H1 (cell line): ENCODE measurements at regions of chr12 and their contacts with region 1.

Region 1: GRCh38 chr12:49776413-49776812 is 35.1 kb downstream of the TMBIM6 start:
- DNase-seq: peak; percentile 60 to 76
- H3K4me3 ChIP-seq: no peak overlapping the region
- H3K27ac ChIP-seq: no peak overlapping the region
- H3K4me1 ChIP-seq: peaks cover 0 to 2% (median 0%) of the 10 kb centered on the region in 4 experiments; a peak in 2 of 7 replicates
- H3K27me3 ChIP-seq: no peaks in the 10 kb centered on the region
- CTCF ChIP-seq: peak; percentile 87 to 91 (median 90)
- EP300 ChIP-seq: no peak
- POLR2A ChIP-seq: no peak
- RAD21 ChIP-seq: peak; percentile 90 to 96

Region 2: DNA sequence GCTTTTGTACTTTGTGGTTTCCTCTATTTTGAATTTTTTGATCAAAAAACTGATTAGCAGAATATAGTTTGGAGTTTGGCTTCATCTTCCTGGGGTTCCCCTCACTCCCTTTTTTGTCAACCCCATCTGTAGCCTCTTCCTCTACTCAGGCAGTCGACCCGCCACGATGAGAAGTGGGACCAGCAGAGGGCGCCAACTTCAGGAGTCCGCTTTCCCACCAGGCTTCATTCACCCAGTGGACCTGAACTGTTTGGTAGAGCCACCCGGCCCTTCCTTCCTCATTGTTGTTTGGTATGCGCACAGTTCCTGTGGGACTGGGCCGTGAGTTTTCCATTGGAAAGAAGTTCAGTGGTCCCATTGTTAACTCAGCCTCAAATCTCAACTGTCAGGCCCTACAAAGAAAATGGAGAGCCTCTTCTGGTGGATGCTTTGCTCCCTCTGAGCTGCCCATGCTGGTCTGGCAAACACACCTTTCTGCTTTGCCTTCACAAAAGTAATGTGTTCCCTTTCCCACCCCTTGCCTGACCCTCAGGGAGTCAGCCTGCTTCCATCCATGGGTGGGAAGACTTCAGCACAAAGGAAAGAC is 13.3 kb before region 1 on chr12:
- CTCF ChIA-PET with region 1: interaction called, 29 read pairs
- POLR2A ChIA-PET with region 1: interaction called, 6 read pairs
- DNase-seq: peak; percentile 38 to 92
- H3K4me3 ChIP-seq: no peak overlapping the region
- H3K27ac ChIP-seq: no peak overlapping the region
- H3K4me1 ChIP-seq: peaks cover 0 to 4% (median 0%) of the 10 kb centered on the region in 4 experiments; a peak in 1 of 7 replicates
- H3K27me3 ChIP-seq: no peaks in the 10 kb centered on the region
- CTCF ChIP-seq: peak; percentile 83 to 89 (median 87)
- EP300 ChIP-seq: no peak
- POLR2A ChIP-seq: no peak
- RAD21 ChIP-seq: peak; percentile 50 to 54; a peak in 3 of 4 replicates

Region 3: GRCh38 chr12:49800421-49801140 is 24.2 kb after region 1 on chr12:
- CTCF ChIA-PET with region 1: interaction called, 54 read pairs
- POLR2A ChIA-PET with region 1: interaction called, 4 read pairs
- DNase-seq: no peak
- H3K4me3 ChIP-seq: no peak overlapping the region
- H3K27ac ChIP-seq: no peak overlapping the region
- H3K4me1 ChIP-seq: no peaks in the 10 kb centered on the region
- H3K27me3 ChIP-seq: no peaks in the 10 kb centered on the region
- CTCF ChIP-seq: no peak
- EP300 ChIP-seq: no peak
- POLR2A ChIP-seq: no peak
- RAD21 ChIP-seq: no peak

Region 4: GRCh38 chr12:49821373-49822287 is 45.2 kb after region 1 on chr12:
- CTCF ChIA-PET with region 1: interaction called, 30 read pairs
- POLR2A ChIA-PET with region 1: interaction called, 3 read pairs
- DNase-seq: no peak
- H3K4me3 ChIP-seq: no peak overlapping the region
- H3K27ac ChIP-seq: no peak overlapping the region
- H3K4me1 ChIP-seq: peaks cover 5 to 25% (median 15%) of the 10 kb centered on the region in 4 experiments
- H3K27me3 ChIP-seq: no peaks in the 10 kb centered on the region
- CTCF ChIP-seq: peak in 1 of 3 experiments; percentile 2; a peak in 1 of 4 replicates
- EP300 ChIP-seq: no peak
- POLR2A ChIP-seq: no peak
- RAD21 ChIP-seq: no peak

Region 5: DNA sequence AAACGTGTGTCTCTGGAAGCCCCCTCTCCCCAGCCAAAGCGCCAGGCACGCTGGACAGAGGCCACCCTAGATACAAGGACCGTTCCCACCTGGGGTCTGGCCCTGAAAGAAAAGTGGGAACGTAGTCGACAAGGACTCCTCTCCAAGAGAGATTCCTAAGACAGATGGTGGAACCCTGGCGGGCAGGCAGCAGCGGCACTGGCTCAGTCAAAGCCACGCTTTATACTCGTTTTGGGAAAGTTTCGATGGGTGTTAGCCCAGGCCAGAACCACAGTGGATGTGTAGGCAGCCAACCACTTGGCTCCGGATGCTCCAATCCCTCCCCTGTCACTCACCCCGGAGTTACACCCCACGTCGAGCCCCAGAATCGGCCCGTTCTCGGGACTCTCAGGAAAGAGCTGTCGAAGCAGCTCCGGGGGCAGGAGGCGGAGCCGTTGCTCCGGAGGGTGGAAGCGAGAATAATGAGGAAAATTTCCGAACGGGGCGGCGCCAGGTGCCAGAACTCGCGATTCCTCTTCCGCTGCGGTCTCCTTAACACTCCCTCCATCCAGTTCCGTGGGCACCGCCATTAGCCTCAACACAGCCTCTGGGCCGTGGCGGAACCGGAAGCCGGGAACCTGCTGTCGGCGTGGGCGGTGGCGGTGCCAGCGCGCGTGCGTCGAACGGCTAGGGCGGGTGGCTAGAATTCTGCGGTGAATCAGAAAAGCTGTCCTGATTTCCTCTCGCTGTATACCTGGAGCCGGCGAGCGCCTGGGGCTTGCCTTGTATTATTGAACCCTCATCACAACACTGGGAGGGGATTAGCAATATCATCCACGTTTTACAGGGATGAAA is 66.3 kb after region 1 on chr12 and contains the start of gene BCDIN3D:
- CTCF ChIA-PET with region 1: interaction called, 119 read pairs
- POLR2A ChIA-PET with region 1: interaction called, 6 read pairs
- DNase-seq: peak in 1 of 2 experiments; percentile 83
- H3K4me3 ChIP-seq: peak within 1 kb of the TSS; percentile 63 to 90 (median 84)
- H3K27ac ChIP-seq: peak within 1 kb of the TSS; percentile 62
- H3K4me1 ChIP-seq: peaks cover 2 to 5% (median 4%) of the 10 kb centered on the region in 4 experiments; a peak in 4 of 7 replicates
- H3K27me3 ChIP-seq: no peaks in the 10 kb centered on the region
- CTCF ChIP-seq: no peak
- EP300 ChIP-seq: no peak
- POLR2A ChIP-seq: peak in 1 of 2 experiments; percentile 80; a peak in 2 of 3 replicates
- RAD21 ChIP-seq: no peak
- total RNA-seq, gene BCDIN3D: 2.4 and 2.5 TPM in 2 replicates

Region 6: GRCh38 chr12:49882851-49883470 is 106.5 kb after region 1 on chr12:
- CTCF ChIA-PET with region 1: no interaction called
- POLR2A ChIA-PET with region 1: no interaction called
- DNase-seq: no peak
- H3K4me3 ChIP-seq: no peak overlapping the region
- H3K27ac ChIP-seq: no peak overlapping the region
- H3K4me1 ChIP-seq: peaks cover 0 to 29% (median 13%) of the 10 kb centered on the region in 4 experiments; a peak in 6 of 7 replicates
- H3K27me3 ChIP-seq: no peaks in the 10 kb centered on the region; a peak in 1 of 7 replicates
- CTCF ChIP-seq: peak in 1 of 3 experiments; percentile 39; a peak in 1 of 4 replicates
- EP300 ChIP-seq: no peak
- POLR2A ChIP-seq: no peak
- RAD21 ChIP-seq: peak in 1 of 2 experiments; percentile 32; a peak in 2 of 4 replicates